Activated CD4-positive, alpha-beta T cell treated with anti-CD3 and anti-CD28 coated beads for 36 hours (primary cell): ENCODE measurements at regions of chr3 and their contacts with region 1.

Region 1: GRCh38 chr3:177057768-177058167 is 139.5 kb downstream of the TBL1XR1 start:
- DNase-seq: peak; percentile 82
- ATAC-seq: peak; percentile 97
- H3K4me3 Mint-ChIP-seq: no peak overlapping the region
- H3K27ac Mint-ChIP-seq: no peak overlapping the region
- H3K4me1 Mint-ChIP-seq: peaks cover 37% of the 10 kb centered on the region
- H3K27me3 Mint-ChIP-seq: no peaks in the 10 kb centered on the region

Region 2: GRCh38 chr3:177109688-177110330 is 52.0 kb after region 1 on chr3:
- CTCF ChIA-PET with region 1: interaction called, 3 read pairs
- POLR2A ChIA-PET with region 1: no interaction called
- intact Hi-C with region 1: loop called in 1 of 2 experiments (anchors 5 kb)
- DNase-seq: no peak
- ATAC-seq: peak; percentile 71
- H3K4me3 Mint-ChIP-seq: peak overlapping the region; percentile 7
- H3K27ac Mint-ChIP-seq: peak overlapping the region; percentile 64
- H3K4me1 Mint-ChIP-seq: peaks cover 76% of the 10 kb centered on the region
- H3K27me3 Mint-ChIP-seq: no peaks in the 10 kb centered on the region

Region 3: DNA sequence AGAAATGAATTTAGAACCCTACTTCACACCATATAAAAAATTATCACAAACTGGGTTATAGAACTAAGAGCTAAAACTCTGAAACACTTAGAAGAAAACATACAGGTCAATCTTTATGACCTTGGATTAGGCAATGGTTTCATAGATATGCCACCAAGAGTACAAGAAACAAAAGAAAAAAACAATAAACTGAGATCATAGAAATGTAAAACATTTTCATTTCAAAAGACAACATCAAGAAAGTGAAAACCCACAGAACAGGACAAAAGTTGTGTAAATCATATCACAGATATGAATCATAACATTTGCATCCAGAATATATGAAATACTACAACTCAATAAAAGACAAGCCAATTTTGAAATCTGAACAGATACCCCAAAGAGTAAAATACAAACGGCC is 67.1 kb after region 1 on chr3:
- CTCF ChIA-PET with region 1: interaction called, 4 read pairs
- POLR2A ChIA-PET with region 1: no interaction called
- intact Hi-C with region 1: loop called in 1 of 2 experiments (anchors 5 kb)
- DNase-seq: no peak
- ATAC-seq: peak; percentile 68
- H3K4me3 Mint-ChIP-seq: no peak overlapping the region
- H3K27ac Mint-ChIP-seq: peak overlapping the region; percentile 40
- H3K4me1 Mint-ChIP-seq: peaks cover 81% of the 10 kb centered on the region
- H3K27me3 Mint-ChIP-seq: no peaks in the 10 kb centered on the region

Region 4: DNA sequence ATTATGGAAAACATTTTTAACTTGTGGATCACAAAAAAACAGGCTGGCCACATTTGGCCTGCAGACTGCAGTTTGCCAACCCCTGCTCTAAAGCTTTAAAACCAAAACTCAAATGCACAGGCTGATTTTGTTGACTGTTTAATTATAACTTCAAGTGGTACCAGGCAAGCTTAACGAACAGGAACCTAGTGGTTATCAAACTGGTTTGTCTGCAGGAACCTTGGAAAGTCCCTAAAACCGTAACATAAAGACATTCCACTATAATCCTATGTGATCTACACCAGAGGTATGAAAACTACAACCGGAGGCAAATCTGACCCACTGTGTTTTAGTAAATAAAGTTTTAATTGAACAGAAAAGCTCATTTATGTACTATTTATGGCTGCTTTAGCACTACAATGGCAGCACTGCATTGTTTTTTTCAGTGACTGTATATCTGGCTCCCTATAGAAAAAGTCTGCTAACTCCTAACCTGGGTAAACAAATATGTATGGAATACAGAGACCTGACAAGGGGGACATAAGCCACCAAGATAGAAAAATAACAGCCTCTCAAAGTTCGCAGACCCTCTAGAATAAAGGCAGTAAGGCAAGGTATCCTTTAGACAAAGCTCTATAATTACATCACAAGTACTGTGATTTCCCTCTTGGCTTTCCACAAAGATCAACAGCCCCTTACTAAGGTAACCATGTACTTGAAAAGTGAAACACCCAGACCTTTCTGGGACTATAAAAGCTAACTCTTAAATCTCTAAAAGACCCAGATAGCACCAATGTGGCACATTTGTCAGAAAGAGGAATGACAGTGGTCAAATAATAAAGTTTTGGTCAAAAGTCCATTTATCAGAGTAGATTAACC is 87.4 kb after region 1 on chr3:
- CTCF ChIA-PET with region 1: interaction called, 3 read pairs
- POLR2A ChIA-PET with region 1: no interaction called
- intact Hi-C with region 1: loop called (anchors 5 kb)
- DNase-seq: no peak
- ATAC-seq: peak; percentile 26
- H3K4me3 Mint-ChIP-seq: peak overlapping the region; percentile 30
- H3K27ac Mint-ChIP-seq: peak overlapping the region; percentile 59
- H3K4me1 Mint-ChIP-seq: peaks cover 77% of the 10 kb centered on the region
- H3K27me3 Mint-ChIP-seq: no peaks in the 10 kb centered on the region

Region 5: DNA sequence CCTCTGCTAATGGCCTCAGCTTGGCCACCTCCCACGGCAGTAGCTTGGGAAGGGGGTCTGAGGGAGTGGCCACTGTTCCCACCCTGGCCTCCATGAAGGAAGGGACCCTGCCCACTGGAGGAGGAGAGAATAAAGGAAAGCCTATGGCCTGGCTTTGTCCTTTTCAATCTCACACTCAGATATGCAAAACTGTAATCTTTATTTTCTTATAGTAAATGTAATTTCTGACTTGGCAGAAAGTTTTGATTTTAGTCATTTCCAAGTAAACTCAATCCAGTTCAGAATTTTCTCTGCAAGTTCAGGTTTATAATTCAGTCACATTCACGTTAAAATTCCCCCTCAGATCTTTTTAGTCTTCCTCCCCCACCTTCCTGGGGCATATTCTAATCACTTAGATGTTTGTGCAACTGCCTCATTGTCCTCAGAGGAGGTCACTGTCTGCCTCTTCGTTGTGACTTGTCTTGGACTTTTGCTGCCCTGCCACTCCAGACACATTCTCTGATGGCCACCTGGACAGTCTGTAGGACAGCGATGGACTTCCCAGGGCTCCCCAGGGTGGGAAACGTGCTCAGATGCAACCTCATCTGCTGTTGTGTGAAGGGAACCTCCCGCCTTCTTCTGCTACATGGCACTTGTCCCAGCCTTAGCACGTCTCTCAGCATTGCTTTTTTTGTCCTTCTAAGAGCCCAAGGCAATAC is 362.3 kb after region 1 on chr3:
- CTCF ChIA-PET with region 1: no interaction called
- POLR2A ChIA-PET with region 1: no interaction called
- intact Hi-C with region 1: loop called (anchors 1 to 2 kb)
- DNase-seq: peak; percentile 31
- ATAC-seq: peak; percentile 93
- H3K4me3 Mint-ChIP-seq: peak overlapping the region; percentile 37
- H3K27ac Mint-ChIP-seq: peak overlapping the region; percentile 86
- H3K4me1 Mint-ChIP-seq: peaks cover 38% of the 10 kb centered on the region
- H3K27me3 Mint-ChIP-seq: no peaks in the 10 kb centered on the region